ENCODE measurements at regions of chr12 and their contacts with region 1.

Region 1: DNA sequence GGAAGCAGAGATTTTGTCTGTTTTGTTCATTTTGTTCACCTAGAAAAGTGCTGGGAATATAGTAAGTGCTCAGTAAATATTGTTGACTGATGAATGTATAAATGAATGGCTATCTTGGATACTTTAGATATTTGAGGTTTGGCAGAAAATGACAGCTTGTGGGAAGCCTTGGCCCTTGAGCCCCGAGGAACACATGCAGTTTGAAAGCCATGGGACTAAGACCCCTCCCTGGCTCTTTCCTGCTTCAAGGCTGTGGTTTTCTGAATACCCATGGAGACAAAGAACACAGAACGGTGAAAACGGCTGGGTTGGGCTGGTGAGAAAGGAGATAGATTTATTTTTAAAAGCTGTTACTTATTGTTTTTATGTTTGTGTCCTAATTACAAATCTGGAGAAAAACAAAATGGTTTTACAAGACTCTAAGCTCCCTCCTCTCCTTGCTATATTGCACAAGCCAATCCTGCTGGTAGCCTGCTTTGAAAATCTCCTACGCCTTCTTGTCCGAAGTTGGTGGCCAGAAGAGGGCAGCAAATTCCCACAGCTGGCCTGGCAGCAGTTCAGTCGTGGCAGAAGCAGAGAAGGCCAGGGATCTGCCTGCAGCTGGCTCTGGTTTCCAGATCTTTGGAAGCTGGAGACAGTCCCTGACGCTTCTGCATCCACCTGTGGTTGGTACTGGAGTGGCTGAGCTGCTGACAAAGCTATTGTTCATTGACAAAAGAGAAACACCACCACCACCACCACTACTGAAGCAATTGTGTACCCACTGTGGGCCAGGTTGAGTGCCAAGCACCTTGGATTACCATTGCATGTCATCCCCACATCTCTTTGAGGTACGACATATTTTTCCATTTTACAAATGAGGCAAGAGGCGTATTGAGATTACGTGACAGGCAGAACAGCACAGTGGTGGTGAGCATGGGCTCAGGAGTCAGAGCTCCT is 5.2 kb upstream of the KRT85 start:
- DNase-seq: peak; percentile 66
- H3K4me3 Mint-ChIP-seq: no peak overlapping the region
- H3K27ac Mint-ChIP-seq: no peak overlapping the region
- H3K4me1 Mint-ChIP-seq: no peaks in the 10 kb centered on the region
- H3K27me3 Mint-ChIP-seq: peaks cover 32% of the 10 kb centered on the region

Region 2: GRCh38 chr12:52338241-52338960 is 34.1 kb before region 1 on chr12:
- CTCF ChIA-PET with region 1: no interaction called
- POLR2A ChIA-PET with region 1: no interaction called
- DNase-seq: no peak
- H3K4me3 Mint-ChIP-seq: no peak overlapping the region
- H3K27ac Mint-ChIP-seq: no peak overlapping the region
- H3K4me1 Mint-ChIP-seq: peaks cover 8% of the 10 kb centered on the region
- H3K27me3 Mint-ChIP-seq: peaks cover 14% of the 10 kb centered on the region

Region 3: DNA sequence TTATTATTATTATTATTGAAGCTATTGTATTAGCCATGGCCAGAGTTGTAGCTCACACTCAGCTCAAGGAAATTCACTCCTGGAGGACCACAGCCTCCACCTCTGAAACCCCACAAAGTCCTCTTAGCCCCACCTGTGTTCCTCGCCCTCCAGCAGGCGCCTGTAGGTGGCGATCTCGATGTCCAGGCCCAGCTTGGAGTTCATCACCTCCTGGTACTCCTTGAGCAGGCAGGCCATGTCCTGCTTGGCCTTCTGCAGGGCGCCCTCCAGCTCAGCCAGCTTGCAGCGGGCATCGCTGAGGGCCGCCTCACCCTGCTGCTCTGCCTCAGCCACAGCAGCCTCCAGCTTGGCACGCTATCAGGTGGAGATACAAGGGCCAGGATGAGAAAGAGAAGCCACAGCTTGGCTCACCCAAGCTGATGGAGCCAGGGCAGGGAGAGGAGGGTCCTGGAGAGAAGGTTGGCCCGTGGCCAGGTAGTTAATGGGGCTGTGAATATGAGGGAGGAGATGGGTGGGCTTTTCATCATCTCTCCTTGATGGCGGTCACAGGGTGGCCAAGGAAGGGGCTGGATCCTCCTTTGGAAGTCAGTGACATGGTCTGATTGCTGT is 10.3 kb before region 1 on chr12:
- CTCF ChIA-PET with region 1: interaction called, 12 read pairs
- POLR2A ChIA-PET with region 1: no interaction called
- DNase-seq: no peak
- H3K4me3 Mint-ChIP-seq: no peak overlapping the region
- H3K27ac Mint-ChIP-seq: no peak overlapping the region
- H3K4me1 Mint-ChIP-seq: peaks cover 16% of the 10 kb centered on the region
- H3K27me3 Mint-ChIP-seq: peaks cover 10% of the 10 kb centered on the region

Measured in activated CD4-positive, alpha-beta memory T cell treated with anti-CD3 and anti-CD28 coated beads, Interleukin-2, amount 10 ng/mL, durations not matched to agents 7 days and 5 days (primary cell).